ENCODE measurements at regions of chr13 and their contacts with region 1.

Region 1: GRCh38 chr13:41652727-41653361 is 195.5 kb downstream of the RGCC start:
- DNase-seq: no peak
- ATAC-seq: no peak
- H3K4me3 ChIP-seq: no peak overlapping the region
- H3K27ac ChIP-seq: peak overlapping the region; percentile 60; the same call in 1 of the 2 replicates
- H3K4me1 ChIP-seq: peaks cover 24% of the 10 kb centered on the region
- H3K27me3 ChIP-seq: no peaks in the 10 kb centered on the region
- CTCF ChIP-seq: peak; percentile 57; the same call in 1 of the 2 replicates

Region 2: GRCh38 chr13:41384755-41385503 is 267.9 kb before region 1 on chr13:
- CTCF ChIA-PET with region 1: no interaction called
- POLR2A ChIA-PET with region 1: no interaction called
- in situ Hi-C with region 1: no loop called
- intact Hi-C with region 1: loop called (anchors 10 kb)
- DNase-seq: no peak
- ATAC-seq: no peak
- H3K4me3 ChIP-seq: no peak overlapping the region
- H3K27ac ChIP-seq: no peak overlapping the region
- H3K4me1 ChIP-seq: no peaks in the 10 kb centered on the region
- H3K27me3 ChIP-seq: no peaks in the 10 kb centered on the region
- CTCF ChIP-seq: peak; percentile 61

Region 3: DNA sequence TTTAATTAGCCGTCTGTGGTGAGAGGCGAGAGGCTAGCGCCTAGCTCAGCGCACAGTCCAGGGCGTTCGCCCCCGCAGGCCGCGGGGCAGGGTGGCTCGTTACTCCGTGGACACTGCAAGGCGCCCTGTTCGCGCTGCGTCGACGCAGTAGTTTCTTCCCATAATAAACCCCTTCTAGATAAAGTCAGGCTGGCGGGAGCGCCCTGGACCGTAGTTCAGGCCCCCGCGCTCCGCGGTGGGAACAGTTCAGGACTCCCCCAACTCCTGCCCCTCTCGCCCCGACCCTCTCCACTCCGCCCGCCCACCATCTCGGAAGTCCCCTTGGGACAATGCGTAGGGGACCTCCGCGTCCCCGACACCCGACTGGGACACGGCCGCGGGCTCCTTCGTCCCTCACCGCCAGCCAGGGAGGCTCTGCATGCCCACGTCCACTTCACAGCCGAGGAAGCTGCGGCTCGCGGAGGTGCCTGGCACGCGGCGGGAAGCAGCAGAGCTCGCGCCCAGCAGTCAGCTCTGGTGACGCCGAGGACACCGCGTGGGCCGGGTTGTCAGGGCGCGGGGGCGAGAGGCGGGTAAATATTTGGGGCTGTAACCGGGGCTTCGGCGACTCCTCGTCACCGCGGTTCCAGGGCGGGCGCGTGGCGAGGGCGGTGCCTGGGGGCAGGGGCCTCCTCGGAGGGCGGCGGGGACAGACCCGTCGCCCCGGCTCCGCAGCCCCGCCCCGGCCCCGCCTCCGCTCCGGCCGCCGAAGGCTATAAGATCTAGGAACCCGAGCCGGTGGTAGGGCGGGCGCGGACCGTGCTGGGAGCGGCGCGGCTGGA is 195.9 kb before region 1 on chr13 and contains the start of gene RGCC:
- CTCF ChIA-PET with region 1: interaction called, 8 read pairs
- POLR2A ChIA-PET with region 1: no interaction called
- in situ Hi-C with region 1: no loop called
- intact Hi-C with region 1: loop called (anchors 5 kb)
- DNase-seq: no peak
- ATAC-seq: peak; percentile 84
- H3K4me3 ChIP-seq: peak within 1 kb of the TSS; percentile 51 to 59
- H3K27ac ChIP-seq: no peak within 1 kb of the TSS
- H3K4me1 ChIP-seq: no peaks in the 10 kb centered on the region; the same call in 1 of the 2 replicates
- H3K27me3 ChIP-seq: no peaks in the 10 kb centered on the region
- CTCF ChIP-seq: no peak
- total RNA-seq, gene RGCC: 6.7 TPM

Region 4: DNA sequence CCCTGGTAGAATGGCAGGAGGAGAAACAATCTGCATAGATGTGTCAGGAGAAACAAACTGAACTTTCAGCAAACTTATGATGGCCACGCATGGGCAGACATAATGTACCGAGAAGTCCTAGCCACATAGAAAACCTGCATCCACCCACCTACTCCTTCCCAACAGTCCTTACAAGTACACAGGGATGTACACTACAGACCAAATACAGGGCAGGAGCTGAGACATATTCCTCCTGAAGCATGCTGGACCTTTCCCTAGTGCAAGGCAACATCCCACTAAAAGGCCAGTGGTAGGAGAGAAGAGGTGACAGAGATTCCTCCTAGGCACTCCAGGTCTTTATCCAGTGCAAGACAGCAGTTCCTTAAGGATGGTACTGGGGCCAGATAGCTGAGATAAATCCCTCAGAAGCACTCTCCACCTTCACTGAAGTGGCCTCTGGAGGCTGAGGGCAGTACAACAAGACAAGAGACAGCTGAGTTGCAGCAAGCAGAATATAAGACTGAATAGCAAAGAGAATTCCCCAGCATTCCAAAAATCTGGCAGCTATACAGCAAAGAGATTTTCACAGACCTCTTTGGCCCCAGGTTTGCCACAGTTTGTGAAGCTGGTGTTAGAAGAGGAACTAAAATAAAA is 289.7 kb after region 1 on chr13:
- CTCF ChIA-PET with region 1: no interaction called
- POLR2A ChIA-PET with region 1: no interaction called
- in situ Hi-C with region 1: no loop called
- intact Hi-C with region 1: no loop called
- DNase-seq: no peak
- ATAC-seq: peak; percentile 79; the same call in 1 of the 2 replicates
- H3K4me3 ChIP-seq: no peak overlapping the region
- H3K27ac ChIP-seq: no peak overlapping the region
- H3K4me1 ChIP-seq: no peaks in the 10 kb centered on the region
- H3K27me3 ChIP-seq: no peaks in the 10 kb centered on the region
- CTCF ChIP-seq: peak; percentile 32